Lower lobe of right lung (tissue), 2 donors: ENCODE measurements at regions of chr1 and their contacts with region 1.

Region 1: DNA sequence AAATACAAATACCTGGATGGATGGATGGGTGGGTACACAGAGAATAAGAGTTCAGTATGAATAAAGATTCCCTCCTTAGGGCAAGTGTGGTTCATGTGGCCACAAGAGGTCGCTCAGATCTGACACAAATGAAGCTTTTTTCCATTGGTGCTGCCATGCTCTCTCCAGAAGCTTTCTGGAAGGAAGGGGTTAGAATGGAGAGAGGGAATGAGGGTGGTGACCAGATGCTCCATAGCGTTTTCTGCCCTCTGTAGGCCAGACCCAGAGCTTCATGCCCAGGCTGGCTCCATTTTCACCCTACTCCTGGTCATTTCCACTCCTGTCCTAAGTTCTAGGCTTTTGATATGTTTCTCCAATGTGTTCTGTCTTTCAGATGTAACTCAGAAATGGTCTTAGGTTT is 3.3 kb upstream of the FCRL6 start:
- DNase-seq: no peak
- ATAC-seq: peak; percentile 85 to 88
- H3K4me3 ChIP-seq: no peak overlapping the region
- H3K27ac ChIP-seq: no peak overlapping the region
- H3K4me1 ChIP-seq: peaks cover 15% of the 10 kb centered on the region
- H3K27me3 ChIP-seq: peaks cover 5% of the 10 kb centered on the region
- CTCF ChIP-seq: peak; percentile 82

Region 2: DNA sequence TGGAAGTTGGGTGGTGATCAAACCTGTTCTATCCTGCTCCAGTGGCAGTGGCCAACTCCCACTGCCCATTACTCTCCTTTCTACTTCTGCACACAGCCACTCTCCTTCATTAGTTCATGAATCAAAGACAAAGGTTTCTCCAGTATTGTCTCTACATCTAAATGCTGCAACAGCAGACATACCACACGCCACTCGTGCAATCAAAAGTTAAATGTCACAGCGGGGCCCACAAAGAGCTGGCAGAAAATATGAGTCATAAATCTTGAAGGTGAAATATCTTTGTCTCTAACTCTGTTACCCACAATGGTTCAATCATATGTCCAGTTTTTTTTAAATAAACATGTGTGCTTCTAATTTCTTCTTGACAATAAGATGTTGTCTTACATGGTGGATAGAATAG is 198.0 kb before region 1 on chr1:
- intact Hi-C with region 1: no loop called
- DNase-seq: no peak
- ATAC-seq: no peak
- H3K4me3 ChIP-seq: no peak overlapping the region
- H3K27ac ChIP-seq: no peak overlapping the region
- H3K4me1 ChIP-seq: no peaks in the 10 kb centered on the region
- H3K27me3 ChIP-seq: no peaks in the 10 kb centered on the region
- CTCF ChIP-seq: no peak

Region 3: DNA sequence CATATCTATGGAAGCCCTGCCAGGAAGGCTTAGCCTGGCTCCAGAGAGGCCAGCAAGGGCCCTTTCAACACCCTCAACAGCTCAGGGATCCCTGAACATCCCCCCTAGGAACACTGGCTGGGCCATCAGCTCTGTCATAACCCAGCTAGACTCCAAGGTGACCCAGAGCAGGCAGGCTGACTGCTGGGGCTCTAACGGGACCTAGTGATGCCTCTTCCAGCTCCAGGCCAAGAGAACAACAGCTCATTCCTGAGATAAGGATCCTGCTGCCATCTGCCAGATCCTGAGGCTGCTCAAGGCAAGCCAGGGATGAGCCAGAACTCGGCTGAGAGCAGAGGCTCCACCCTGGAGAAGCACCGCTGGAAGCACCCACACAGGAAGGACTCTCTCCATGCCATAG is 61.5 kb after region 1 on chr1:
- intact Hi-C with region 1: no loop called
- DNase-seq: no peak
- ATAC-seq: no peak
- H3K4me3 ChIP-seq: no peak overlapping the region
- H3K27ac ChIP-seq: no peak overlapping the region
- H3K4me1 ChIP-seq: peaks cover 1% of the 10 kb centered on the region
- H3K27me3 ChIP-seq: no peaks in the 10 kb centered on the region
- CTCF ChIP-seq: no peak

Region 4: DNA sequence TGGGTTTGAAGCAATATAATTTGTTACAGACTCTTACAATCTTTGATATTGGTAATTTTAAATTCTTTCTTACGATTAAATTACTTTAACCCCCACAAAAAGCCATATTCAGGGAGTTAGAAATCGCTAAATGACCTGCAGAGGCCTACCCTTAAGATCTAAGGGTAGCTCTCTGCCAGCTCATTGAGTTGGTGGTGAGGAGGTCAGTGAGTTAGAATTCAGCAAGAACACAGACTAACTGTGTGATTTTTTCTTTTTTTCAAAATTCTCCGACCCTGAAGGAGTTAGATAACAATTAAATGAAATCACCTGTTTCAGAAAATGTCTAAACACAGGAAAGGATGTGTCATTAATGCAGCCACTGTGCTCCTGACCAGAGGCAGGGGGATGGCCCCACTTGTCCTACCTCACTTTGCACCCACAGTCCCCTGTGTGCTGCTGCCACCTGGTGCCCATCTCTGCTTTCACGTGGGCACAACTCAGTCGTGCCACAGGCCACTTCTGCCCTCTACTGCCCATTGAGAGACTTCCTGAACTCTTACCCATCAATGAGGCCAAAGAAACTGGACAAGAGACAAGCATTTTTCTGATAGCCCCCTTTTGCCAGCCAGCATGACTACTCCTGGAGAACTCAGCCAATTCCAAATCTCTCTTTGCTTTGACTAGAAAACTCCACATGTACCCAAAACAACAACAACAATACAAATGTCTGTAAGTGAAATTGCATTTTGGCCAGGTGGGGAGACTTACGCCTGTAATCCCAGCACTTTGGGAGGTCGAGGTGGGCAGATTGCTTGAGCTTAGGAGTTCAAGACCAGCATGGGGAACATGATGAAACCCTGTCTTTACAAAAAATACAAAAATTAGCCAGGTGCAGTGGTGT is 92.6 kb after region 1 on chr1:
- intact Hi-C with region 1: loop called (anchors 5 kb)
- DNase-seq: peak; percentile 90
- ATAC-seq: peak; percentile 95 to 96
- H3K4me3 ChIP-seq: no peak overlapping the region
- H3K27ac ChIP-seq: no peak overlapping the region
- H3K4me1 ChIP-seq: peaks cover 40% of the 10 kb centered on the region
- H3K27me3 ChIP-seq: no peaks in the 10 kb centered on the region
- CTCF ChIP-seq: peak; percentile 97